ENCODE measurements at regions of chr12 and their contacts with region 1.

Region 1: GRCh38 chr12:50162230-50162629 is 4.9 kb downstream of the CERS5 start:
- H3K4me3 ChIP-seq: no peak overlapping the region
- H3K27ac ChIP-seq: no peak overlapping the region
- H3K4me1 ChIP-seq: peaks cover 3% of the 10 kb centered on the region; the same call in 1 of the 2 replicates
- CTCF ChIP-seq: no peak

Region 2: DNA sequence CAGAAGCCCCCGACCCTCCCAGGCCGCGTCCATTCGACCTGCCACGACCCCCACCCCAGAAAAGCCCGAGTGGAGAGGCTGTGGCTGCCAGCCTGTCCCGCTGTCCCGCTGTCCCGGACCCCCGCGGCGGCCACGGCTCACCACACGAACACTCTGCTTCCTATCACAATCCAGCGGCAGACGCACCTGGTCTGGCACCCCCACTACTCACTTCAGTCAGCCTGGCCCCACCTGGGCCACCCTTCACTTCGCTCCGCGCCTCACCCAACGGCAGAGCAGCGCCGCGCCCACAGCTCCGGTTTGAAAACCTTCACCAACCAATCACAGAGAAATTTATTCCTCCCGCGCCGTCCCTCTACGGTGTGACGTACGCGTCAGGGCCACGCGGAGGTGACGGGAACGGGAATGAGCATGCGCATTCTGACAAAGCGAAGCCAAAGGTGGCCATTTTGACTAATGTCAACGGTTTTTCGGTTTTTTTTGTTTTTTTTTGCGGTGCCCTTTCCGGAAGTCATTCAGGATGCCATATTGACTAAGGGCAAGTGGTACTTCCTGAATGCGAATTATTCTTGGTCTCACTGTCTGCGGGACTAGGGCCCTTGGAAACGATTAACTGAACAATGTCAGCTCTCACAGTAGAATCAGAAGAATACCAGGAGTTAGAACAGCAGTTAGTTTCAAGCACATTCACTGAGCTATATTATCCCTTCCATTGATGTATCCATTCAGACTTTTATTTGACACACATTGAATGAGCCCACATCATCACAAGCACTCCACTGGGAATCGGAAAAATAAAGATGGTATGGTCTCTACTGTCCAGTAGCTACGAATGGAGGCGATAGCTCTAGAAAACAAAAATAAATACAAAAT is 136.8 kb before region 1 on chr12 and contains the start of gene RACGAP1:
- CTCF ChIA-PET with region 1: no interaction called
- POLR2A ChIA-PET with region 1: no interaction called
- H3K4me3 ChIP-seq: peak within 1 kb of the TSS; percentile 93
- H3K27ac ChIP-seq: peak within 1 kb of the TSS; percentile 56
- H3K4me1 ChIP-seq: 0 out of 2 replicates have a peak, but pooled peaks cover 3% of the 10 kb centered on the region
- CTCF ChIP-seq: no peak; the same call in 1 of the 2 replicates

Region 3: DNA sequence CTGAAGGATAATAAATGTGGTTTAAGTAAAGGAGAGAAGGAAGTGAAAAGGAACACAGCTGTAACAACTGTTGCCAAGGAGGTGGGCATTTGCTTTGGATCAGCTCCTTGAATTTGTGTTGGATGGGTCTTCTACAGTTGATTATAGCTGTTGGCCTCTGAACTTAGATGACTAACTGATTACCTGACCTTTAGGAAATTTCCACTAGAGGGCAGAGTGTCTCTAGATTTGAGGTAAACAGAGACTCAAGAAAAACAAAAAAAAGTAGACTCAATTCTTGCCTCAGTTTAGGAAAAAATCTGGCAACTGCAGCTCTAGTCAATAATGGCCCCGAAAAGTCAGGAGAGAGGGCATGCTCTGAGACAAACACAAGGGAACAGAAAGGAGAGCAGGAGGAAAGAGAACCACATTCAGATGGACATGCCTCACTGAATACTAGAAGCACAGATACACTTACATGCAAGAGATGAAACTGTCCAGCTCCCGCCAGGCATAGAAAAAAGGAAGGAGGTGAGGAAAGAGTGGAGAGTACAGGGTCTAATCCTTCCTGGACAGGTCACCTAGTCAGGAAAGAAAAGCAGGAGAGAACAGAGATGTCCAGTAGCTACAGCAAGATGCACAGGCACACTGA is 29.6 kb before region 1 on chr12:
- CTCF ChIA-PET with region 1: interaction called, 5 read pairs
- POLR2A ChIA-PET with region 1: interaction called, 12 read pairs
- H3K4me3 ChIP-seq: no peak overlapping the region
- H3K27ac ChIP-seq: no peak overlapping the region
- H3K4me1 ChIP-seq: no peaks in the 10 kb centered on the region
- CTCF ChIP-seq: peak; percentile 27; the same call in 1 of the 2 replicates

Region 4: GRCh38 chr12:50211392-50212070 is 49.3 kb after region 1 on chr12:
- CTCF ChIA-PET with region 1: no interaction called
- POLR2A ChIA-PET with region 1: no interaction called
- H3K4me3 ChIP-seq: no peak overlapping the region
- H3K27ac ChIP-seq: no peak overlapping the region; the same call in 1 of the 2 replicates
- H3K4me1 ChIP-seq: 0 out of 2 replicates have a peak, but pooled peaks cover 2% of the 10 kb centered on the region
- CTCF ChIP-seq: no peak

Region 5: GRCh38 chr12:50326636-50327284 is 164.5 kb after region 1 on chr12:
- CTCF ChIA-PET with region 1: no interaction called
- POLR2A ChIA-PET with region 1: no interaction called
- H3K4me3 ChIP-seq: no peak overlapping the region
- H3K27ac ChIP-seq: no peak overlapping the region
- H3K4me1 ChIP-seq: peaks cover 5% of the 10 kb centered on the region; the same call in 1 of the 2 replicates
- CTCF ChIP-seq: no peak

Measured in HEK293 (cell line).